K562 (cell line): ENCODE measurements at regions of chr6 and their contacts with region 1.

Region 1: GRCh38 chr6:26122793-26123674 is 35.8 kb downstream of the HFE start:
- DNase-seq: peak; percentile 79 to 99 (median 86)
- ATAC-seq: peak; percentile 62
- H3K4me3 ChIP-seq: peak overlapping the region; percentile 72
- H3K27ac ChIP-seq: peak overlapping the region; percentile 95
- H3K4me1 ChIP-seq: peaks cover 3 to 7% of the 10 kb centered on the region in 2 experiments; a peak in 4 of 5 replicates
- H3K27me3 ChIP-seq: no peaks in the 10 kb centered on the region
- CTCF ChIP-seq: peak in 1 of 3 experiments; percentile 23; a peak in 1 of 6 replicates
- EP300 ChIP-seq: peak; percentile 99
- POLR2A ChIP-seq: no peak; the same call in none of the 2 replicates
- RAD21 ChIP-seq: 0 out of 4 replicates have a peak, but pooled peaks of 1 of the 2 experiments have one; percentile 6

Region 2: DNA sequence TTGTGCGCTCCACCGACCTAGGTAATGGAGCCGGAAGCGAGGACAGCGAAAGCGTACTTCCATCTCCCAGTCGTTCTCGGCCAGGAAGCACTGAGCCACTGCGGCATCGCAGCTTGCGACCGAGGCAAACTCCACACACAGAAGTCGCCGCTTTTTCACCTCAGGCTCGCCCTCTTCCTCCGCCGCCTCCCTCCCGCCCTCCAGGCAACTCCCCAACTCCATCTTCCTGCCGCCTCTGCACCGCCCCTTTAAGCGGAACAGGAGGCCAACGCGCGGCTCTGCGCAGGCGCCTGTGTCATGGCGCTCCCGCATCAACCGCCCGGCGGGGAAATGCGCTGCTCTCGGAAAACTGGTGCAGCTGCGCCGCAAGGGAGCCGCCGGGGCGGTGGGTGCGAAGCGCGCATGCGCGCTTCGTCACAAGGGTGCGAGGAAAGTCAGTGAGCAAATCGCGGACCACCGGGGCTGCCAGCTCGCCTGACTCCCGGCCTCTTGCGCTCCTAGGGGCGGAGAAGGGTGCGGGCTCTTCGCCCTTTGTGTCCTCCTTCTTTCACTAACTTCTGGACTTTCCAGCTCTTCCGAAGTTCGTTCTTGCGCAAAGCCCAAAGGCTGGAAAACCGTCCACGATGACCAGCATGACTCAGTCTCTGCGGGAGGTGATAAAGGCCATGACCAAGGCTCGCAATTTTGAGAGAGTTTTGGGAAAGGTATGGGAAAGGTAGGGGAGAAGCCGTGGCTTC is 1456.2 kb before region 1 on chr6 and contains the starts of genes ACOT13 and TDP2:
- CTCF ChIA-PET with region 1: no interaction called
- POLR2A ChIA-PET with region 1: no interaction called
- in situ Hi-C with region 1: no loop called
- intact Hi-C with region 1: no loop called
- DNase-seq: peak; percentile 97 to 100 (median 98)
- ATAC-seq: peak; percentile 91
- H3K4me3 ChIP-seq: peak within 1 kb of the TSS; percentile 63
- H3K27ac ChIP-seq: peak within 1 kb of the TSS; percentile 91
- H3K4me1 ChIP-seq: peaks cover 8 to 12% of the 10 kb centered on the region in 2 experiments; a peak in 4 of 5 replicates
- H3K27me3 ChIP-seq: no peaks in the 10 kb centered on the region
- CTCF ChIP-seq: peak; percentile 71 to 82 (median 79)
- EP300 ChIP-seq: peak; percentile 37
- POLR2A ChIP-seq: peak; percentile 94
- RAD21 ChIP-seq: peak; percentile 53 to 56; a peak in 3 of 4 replicates
- polyA plus RNA-seq, gene ACOT13: 106 to 127 TPM
- polyA plus RNA-seq, gene TDP2: 27.7 to 28.7 TPM

Region 3: GRCh38 chr6:26025894-26026832 is 96.9 kb before region 1 on chr6:
- CTCF ChIA-PET with region 1: no interaction called
- POLR2A ChIA-PET with region 1: interaction called, 369 read pairs
- in situ Hi-C with region 1: no loop called
- intact Hi-C with region 1: no loop called
- DNase-seq: peak; percentile 72 to 98 (median 76)
- ATAC-seq: peak; percentile 43
- H3K4me3 ChIP-seq: peak overlapping the region; percentile 46
- H3K27ac ChIP-seq: peak overlapping the region; percentile 99
- H3K4me1 ChIP-seq: peaks cover 13 to 40% of the 10 kb centered on the region in 2 experiments
- H3K27me3 ChIP-seq: no peaks in the 10 kb centered on the region
- CTCF ChIP-seq: peak; percentile 81 to 98 (median 97)
- EP300 ChIP-seq: peak; percentile 75
- POLR2A ChIP-seq: no peak
- RAD21 ChIP-seq: peak; percentile 48 to 77

Region 4: DNA sequence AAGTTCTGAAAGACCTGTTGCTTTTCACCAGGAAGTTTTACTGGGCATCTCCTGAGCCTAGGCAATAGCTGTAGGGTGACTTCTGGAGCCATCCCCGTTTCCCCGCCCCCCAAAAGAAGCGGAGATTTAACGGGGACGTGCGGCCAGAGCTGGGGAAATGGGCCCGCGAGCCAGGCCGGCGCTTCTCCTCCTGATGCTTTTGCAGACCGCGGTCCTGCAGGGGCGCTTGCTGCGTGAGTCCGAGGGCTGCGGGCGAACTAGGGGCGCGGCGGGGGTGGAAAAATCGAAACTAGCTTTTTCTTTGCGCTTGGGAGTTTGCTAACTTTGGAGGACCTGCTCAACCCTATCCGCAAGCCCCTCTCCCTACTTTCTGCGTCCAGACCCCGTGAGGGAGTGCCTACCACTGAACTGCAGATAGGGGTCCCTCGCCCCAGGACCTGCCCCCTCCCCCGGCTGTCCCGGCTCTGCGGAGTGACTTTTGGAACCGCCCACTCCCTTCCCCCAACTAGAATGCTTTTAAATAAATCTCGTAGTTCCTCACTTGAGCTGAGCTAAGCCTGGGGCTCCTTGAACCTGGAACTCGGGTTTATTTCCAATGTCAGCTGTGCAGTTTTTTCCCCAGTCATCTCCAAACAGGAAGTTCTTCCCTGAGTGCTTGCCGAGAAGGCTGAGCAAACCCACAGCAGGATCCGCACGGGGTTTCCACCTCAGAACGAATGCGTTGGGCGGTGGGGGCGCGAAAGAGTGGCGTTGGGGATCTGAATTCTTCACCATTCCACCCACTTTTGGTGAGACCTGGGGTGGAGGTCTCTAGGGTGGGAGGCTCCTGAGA is 35.5 kb before region 1 on chr6 and contains the start of gene HFE:
- CTCF ChIA-PET with region 1: no interaction called
- POLR2A ChIA-PET with region 1: interaction called, 22 read pairs
- in situ Hi-C with region 1: no loop called
- intact Hi-C with region 1: no loop called
- DNase-seq: peak; percentile 59 to 75 (median 66)
- ATAC-seq: peak; percentile 92
- H3K4me3 ChIP-seq: peak within 1 kb of the TSS; percentile 56
- H3K27ac ChIP-seq: peak within 1 kb of the TSS; percentile 67
- H3K4me1 ChIP-seq: peaks cover 9% of the 10 kb centered on the region in 2 experiments; a peak in 4 of 5 replicates
- H3K27me3 ChIP-seq: no peaks in the 10 kb centered on the region
- CTCF ChIP-seq: peak in 1 of 3 experiments; percentile 2; a peak in 1 of 6 replicates
- EP300 ChIP-seq: no peak
- POLR2A ChIP-seq: peak; percentile 56; the same call in 1 of the 2 replicates
- RAD21 ChIP-seq: 0 out of 4 replicates have a peak, but pooled peaks of 1 of the 2 experiments have one; percentile 1
- polyA plus RNA-seq, gene HFE: 0.17 to 0.31 TPM

Region 5: DNA sequence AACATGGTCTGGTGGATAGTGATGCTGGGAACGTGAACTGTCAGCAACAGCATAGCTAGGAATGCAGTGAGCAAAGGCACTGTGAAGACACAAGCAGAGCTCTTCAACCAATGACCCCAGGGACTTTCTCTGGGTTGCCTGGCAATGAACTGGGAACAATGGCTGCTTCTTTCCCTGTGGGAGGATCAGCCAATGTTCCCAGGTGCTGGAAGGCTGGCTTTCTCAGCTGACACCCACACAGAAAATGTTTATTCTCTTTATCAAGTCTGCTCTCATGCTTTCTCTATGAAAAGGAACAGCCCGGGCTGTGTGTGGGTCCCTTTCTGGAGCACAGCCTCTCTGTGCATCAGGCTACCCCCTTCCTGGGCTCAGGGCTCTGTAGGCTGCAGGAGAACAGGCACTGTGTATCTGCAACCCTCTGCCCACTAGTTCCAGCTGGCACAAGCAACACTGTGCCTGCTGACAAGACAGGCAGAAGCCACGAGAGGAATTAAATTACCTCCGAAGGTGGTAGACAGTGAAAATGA is 18.4 kb after region 1 on chr6:
- CTCF ChIA-PET with region 1: no interaction called
- POLR2A ChIA-PET with region 1: interaction called, 190 read pairs
- in situ Hi-C with region 1: no loop called
- intact Hi-C with region 1: no loop called
- DNase-seq: no peak
- ATAC-seq: peak; percentile 57
- H3K4me3 ChIP-seq: no peak overlapping the region
- H3K27ac ChIP-seq: no peak overlapping the region; the same call in 2 of the 3 replicates
- H3K4me1 ChIP-seq: no peaks in the 10 kb centered on the region
- H3K27me3 ChIP-seq: no peaks in the 10 kb centered on the region
- CTCF ChIP-seq: no peak
- EP300 ChIP-seq: no peak
- POLR2A ChIP-seq: no peak
- RAD21 ChIP-seq: no peak

Region 6: GRCh38 chr6:26204332-26205165 is 81.5 kb after region 1 on chr6:
- CTCF ChIA-PET with region 1: interaction called, 3 read pairs
- POLR2A ChIA-PET with region 1: interaction called, 205 read pairs
- in situ Hi-C with region 1: loop called (anchors 5 kb)
- intact Hi-C with region 1: loop called (anchors 1 kb)
- DNase-seq: peak; percentile 85 to 99 (median 92)
- ATAC-seq: peak; percentile 67
- H3K4me3 ChIP-seq: peak overlapping the region; percentile 57
- H3K27ac ChIP-seq: peak overlapping the region; percentile 99
- H3K4me1 ChIP-seq: peaks cover 9 to 21% of the 10 kb centered on the region in 2 experiments; a peak in 4 of 5 replicates
- H3K27me3 ChIP-seq: no peaks in the 10 kb centered on the region
- CTCF ChIP-seq: peak in 2 of 3 experiments; percentile 67 to 70; a peak in 5 of 6 replicates
- EP300 ChIP-seq: peak; percentile 95
- POLR2A ChIP-seq: peak; percentile 100
- RAD21 ChIP-seq: peak in 1 of 2 experiments; percentile 29; a peak in 2 of 4 replicates

Region 7: GRCh38 chr6:27132532-27133280 is 1009.7 kb after region 1 on chr6:
- CTCF ChIA-PET with region 1: no interaction called
- POLR2A ChIA-PET with region 1: interaction called, 41 read pairs
- in situ Hi-C with region 1: loop called (anchors 5 kb)
- intact Hi-C with region 1: loop called (anchors 1 kb)
- DNase-seq: peak; percentile 93 to 100 (median 97)
- ATAC-seq: peak; percentile 68
- H3K4me3 ChIP-seq: peak overlapping the region; percentile 72
- H3K27ac ChIP-seq: peak overlapping the region; percentile 98
- H3K4me1 ChIP-seq: peaks cover 6 to 7% of the 10 kb centered on the region in 2 experiments
- H3K27me3 ChIP-seq: no peaks in the 10 kb centered on the region
- CTCF ChIP-seq: peak in 1 of 3 experiments; percentile 7; a peak in 1 of 6 replicates
- EP300 ChIP-seq: peak; percentile 26; the same call in 1 of the 2 replicates
- POLR2A ChIP-seq: peak; percentile 100
- RAD21 ChIP-seq: peak in 1 of 2 experiments; percentile 36; a peak in 2 of 4 replicates